Activated naive CD4-positive, alpha-beta T cell treated with anti-CD3 and anti-CD28 coated beads for 36 hours (primary cell): ENCODE measurements at regions of chr7 and their contacts with region 1.

Region 1: GRCh38 chr7:77798394-77799077 is at the starts of genes PHTF2 and TMEM60:
- DNase-seq: peak; percentile 96
- H3K4me3 Mint-ChIP-seq: peak within 1 kb of the TSS; percentile 87
- H3K27ac Mint-ChIP-seq: peak within 1 kb of the TSS; percentile 88
- H3K4me1 Mint-ChIP-seq: peaks cover 66% of the 10 kb centered on the region
- H3K27me3 Mint-ChIP-seq: no peaks in the 10 kb centered on the region
- total RNA-seq, gene PHTF2: 24.5 to 25.3 TPM
- total RNA-seq, gene TMEM60: 11.1 to 11.4 TPM

Region 2: GRCh38 chr7:77266291-77266794 is 532.2 kb before region 1 on chr7:
- CTCF ChIA-PET with region 1: no interaction called
- intact Hi-C with region 1: loop called (anchors 1 kb)
- DNase-seq: peak; percentile 49
- H3K4me3 Mint-ChIP-seq: no peak overlapping the region
- H3K27ac Mint-ChIP-seq: peak overlapping the region; percentile 50
- H3K4me1 Mint-ChIP-seq: peaks cover 13% of the 10 kb centered on the region
- H3K27me3 Mint-ChIP-seq: no peaks in the 10 kb centered on the region

Region 3: DNA sequence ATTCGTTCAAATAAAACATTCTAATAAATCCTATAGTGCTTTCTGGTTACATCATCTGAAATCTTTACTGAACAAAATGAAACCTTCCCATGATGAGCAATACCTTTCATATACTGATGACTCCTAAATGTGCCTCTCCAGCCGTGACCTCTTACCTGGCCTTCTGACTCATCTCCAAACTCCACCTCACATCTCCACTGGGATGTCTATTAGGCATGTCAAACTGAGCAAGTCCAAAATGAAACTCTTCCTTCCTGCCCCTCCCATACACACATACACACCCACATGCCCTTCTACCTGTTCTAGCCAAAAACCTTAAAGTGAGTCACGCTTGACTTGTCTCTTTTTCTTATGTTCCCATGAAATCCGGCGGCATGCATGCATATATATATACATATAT is 405.3 kb before region 1 on chr7:
- CTCF ChIA-PET with region 1: no interaction called
- intact Hi-C with region 1: loop called (anchors 1 kb)
- DNase-seq: peak; percentile 77
- H3K4me3 Mint-ChIP-seq: no peak overlapping the region
- H3K27ac Mint-ChIP-seq: peak overlapping the region; percentile 63
- H3K4me1 Mint-ChIP-seq: peaks cover 37% of the 10 kb centered on the region
- H3K27me3 Mint-ChIP-seq: no peaks in the 10 kb centered on the region

Region 4: GRCh38 chr7:77409005-77409738 is 389.4 kb before region 1 on chr7:
- CTCF ChIA-PET with region 1: no interaction called
- intact Hi-C with region 1: no loop called
- DNase-seq: no peak
- H3K4me3 Mint-ChIP-seq: no peak overlapping the region
- H3K27ac Mint-ChIP-seq: no peak overlapping the region
- H3K4me1 Mint-ChIP-seq: peaks cover 7% of the 10 kb centered on the region
- H3K27me3 Mint-ChIP-seq: no peaks in the 10 kb centered on the region

Region 5: DNA sequence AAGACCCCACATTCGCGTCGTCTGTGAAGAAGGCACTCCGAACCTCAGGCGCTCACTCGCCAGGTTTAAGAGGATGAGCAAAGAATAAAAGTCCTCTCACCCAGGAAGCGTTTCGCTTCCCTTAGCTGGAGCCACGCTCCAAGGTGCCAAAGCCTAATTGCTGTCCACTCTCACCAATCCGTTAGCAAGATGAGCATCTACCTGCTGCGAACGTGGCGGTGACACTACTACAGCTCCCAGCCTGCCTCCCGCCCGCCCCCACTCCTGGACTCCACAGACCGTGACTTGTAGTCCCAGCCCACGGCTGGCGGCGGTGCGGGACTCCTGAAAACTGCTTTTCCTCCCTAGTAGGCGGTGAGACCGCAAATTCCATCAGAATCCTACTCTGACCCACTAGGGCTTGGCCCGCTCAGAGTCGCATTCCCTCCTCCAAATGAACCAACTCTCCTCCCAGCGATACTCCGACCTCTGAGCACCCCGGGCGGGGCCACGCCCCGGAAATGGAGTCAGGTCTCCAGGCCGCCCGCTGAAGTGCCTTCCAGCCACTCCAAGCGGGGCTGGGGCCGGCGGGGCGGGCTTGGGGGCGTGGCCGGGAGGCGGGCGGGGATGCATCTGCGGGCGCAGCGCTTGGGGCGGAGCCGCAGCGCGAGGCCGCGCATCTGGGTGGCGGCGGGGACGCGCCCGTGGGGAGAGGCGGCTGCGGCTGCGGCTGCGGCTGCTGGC is 262.0 kb before region 1 on chr7:
- CTCF ChIA-PET with region 1: no interaction called
- intact Hi-C with region 1: loop called (anchors 1 kb)
- DNase-seq: peak; percentile 98
- H3K4me3 Mint-ChIP-seq: peak overlapping the region; percentile 98
- H3K27ac Mint-ChIP-seq: peak overlapping the region; percentile 84
- H3K4me1 Mint-ChIP-seq: peaks cover 7% of the 10 kb centered on the region
- H3K27me3 Mint-ChIP-seq: no peaks in the 10 kb centered on the region

Region 6: DNA sequence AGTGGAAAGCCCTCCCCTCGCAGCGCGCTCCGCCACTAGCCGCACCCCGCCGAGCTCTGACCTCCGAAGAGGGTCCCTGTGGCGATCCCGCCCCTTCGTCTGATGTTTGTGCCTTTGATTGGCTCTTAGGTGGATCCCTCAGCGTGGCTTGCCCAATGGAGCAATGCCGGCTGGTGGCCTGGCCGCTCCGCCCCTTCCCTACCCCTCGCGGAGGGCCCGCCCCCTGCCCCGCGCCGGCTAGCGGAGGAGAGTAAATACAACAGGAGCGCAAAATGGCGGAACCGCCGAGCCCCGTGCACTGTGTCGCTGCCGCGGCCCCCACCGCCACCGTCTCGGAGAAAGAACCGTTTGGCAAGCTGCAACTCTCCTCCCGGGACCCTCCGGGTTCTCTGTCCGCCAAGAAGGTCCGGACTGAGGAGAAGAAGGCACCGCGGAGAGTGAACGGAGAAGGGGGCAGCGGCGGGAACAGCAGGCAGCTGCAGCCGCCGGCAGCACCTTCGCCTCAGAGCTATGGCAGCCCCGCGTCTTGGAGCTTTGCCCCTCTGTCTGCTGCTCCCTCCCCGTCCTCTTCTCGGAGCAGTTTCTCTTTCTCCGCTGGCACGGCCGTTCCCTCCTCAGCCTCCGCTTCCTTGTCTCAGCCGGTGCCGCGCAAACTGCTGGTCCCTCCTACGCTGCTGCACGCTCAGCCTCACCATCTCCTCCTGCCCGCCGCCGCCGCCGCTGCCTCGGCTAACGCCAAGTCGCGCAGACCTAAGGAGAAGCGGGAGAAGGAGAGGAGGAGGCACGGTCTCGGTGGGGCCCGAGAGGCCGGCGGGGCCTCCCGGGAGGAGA is 102.1 kb before region 1 on chr7 and contains the start of gene RSBN1L:
- CTCF ChIA-PET with region 1: no interaction called
- intact Hi-C with region 1: loop called (anchors 1 kb)
- DNase-seq: peak; percentile 98
- H3K4me3 Mint-ChIP-seq: peak within 1 kb of the TSS; percentile 97
- H3K27ac Mint-ChIP-seq: peak within 1 kb of the TSS; percentile 96
- H3K4me1 Mint-ChIP-seq: peaks cover 44% of the 10 kb centered on the region
- H3K27me3 Mint-ChIP-seq: no peaks in the 10 kb centered on the region
- total RNA-seq, gene RSBN1L: 15.7 to 16.9 TPM

Region 7: DNA sequence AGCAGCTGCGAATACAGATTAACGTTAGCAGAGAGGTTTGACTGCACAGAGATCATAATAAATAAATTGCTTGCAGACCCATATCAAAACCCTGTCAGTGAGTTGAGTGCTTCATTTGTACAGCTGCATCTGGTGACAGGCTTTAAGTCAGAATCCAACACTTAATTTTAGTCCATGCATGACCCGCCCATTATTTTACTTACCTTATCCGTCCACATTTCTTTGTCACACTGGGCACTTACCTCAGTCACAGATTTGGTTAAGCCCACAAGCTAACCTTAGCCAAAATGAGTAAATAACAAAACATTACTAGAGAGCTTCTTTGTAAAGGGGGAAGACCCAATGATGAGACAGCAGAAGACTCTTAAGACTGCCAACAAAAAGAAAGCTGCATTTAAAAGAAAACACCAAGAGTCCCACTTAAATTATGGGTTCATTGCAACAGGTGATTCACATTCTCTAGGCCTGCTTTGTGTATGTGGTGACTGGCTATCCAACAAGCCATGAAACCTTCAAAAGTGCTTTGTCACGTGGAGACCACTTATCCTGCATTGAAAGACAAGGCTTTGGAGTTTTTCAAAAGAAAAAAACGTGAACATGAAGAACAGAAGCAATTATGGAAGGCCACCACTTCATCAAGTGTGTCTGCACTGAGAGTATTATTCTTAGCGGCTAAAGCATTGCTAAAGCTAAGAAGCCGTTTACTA is 32.3 kb after region 1 on chr7:
- CTCF ChIA-PET with region 1: interaction called, 3 read pairs
- intact Hi-C with region 1: loop called (anchors 1 kb)
- DNase-seq: no peak
- H3K4me3 Mint-ChIP-seq: no peak overlapping the region
- H3K27ac Mint-ChIP-seq: no peak overlapping the region
- H3K4me1 Mint-ChIP-seq: peaks cover 42% of the 10 kb centered on the region
- H3K27me3 Mint-ChIP-seq: no peaks in the 10 kb centered on the region

Region 8: GRCh38 chr7:77933394-77933793 is 134.9 kb after region 1 on chr7:
- CTCF ChIA-PET with region 1: interaction called, 6 read pairs
- intact Hi-C with region 1: loop called (anchors 5 kb)
- DNase-seq: no peak
- H3K4me3 Mint-ChIP-seq: no peak overlapping the region
- H3K27ac Mint-ChIP-seq: no peak overlapping the region
- H3K4me1 Mint-ChIP-seq: peaks cover 7% of the 10 kb centered on the region
- H3K27me3 Mint-ChIP-seq: no peaks in the 10 kb centered on the region